ENCODE measurements at regions of chr2 and their contacts with region 1.

Region 1: GRCh38 chr2:18455236-18455862 is 105.1 kb downstream of the RDH14 start:
- DNase-seq: no peak
- ATAC-seq: no peak
- H3K4me3 ChIP-seq: no peak overlapping the region
- H3K4me3 Mint-ChIP-seq: no peak overlapping the region
- H3K27ac ChIP-seq: no peak overlapping the region
- H3K27ac Mint-ChIP-seq: no peak overlapping the region
- H3K4me1 ChIP-seq: no peaks in the 10 kb centered on the region
- H3K4me1 Mint-ChIP-seq: no peaks in the 10 kb centered on the region
- H3K27me3 ChIP-seq: no peaks in the 10 kb centered on the region
- H3K27me3 Mint-ChIP-seq: peaks cover 12% of the 10 kb centered on the region
- CTCF ChIP-seq: no peak

Region 2: GRCh38 chr2:17976871-17977746 is 478.2 kb before region 1 on chr2:
- CTCF ChIA-PET with region 1: no interaction called
- POLR2A ChIA-PET with region 1: no interaction called
- intact Hi-C with region 1: no loop called
- DNase-seq: no peak
- ATAC-seq: no peak
- H3K4me3 ChIP-seq: no peak overlapping the region
- H3K4me3 Mint-ChIP-seq: no peak overlapping the region
- H3K27ac ChIP-seq: no peak overlapping the region
- H3K27ac Mint-ChIP-seq: no peak overlapping the region
- H3K4me1 ChIP-seq: no peaks in the 10 kb centered on the region
- H3K4me1 Mint-ChIP-seq: no peaks in the 10 kb centered on the region
- H3K27me3 ChIP-seq: peaks cover 0 to 3% (median under 1%) of the 10 kb centered on the region in 4 experiments
- H3K27me3 Mint-ChIP-seq: peaks cover 17% of the 10 kb centered on the region
- CTCF ChIP-seq: no peak

Region 3: GRCh38 chr2:18845854-18846445 is 390.6 kb after region 1 on chr2:
- CTCF ChIA-PET with region 1: no interaction called
- POLR2A ChIA-PET with region 1: no interaction called
- intact Hi-C with region 1: no loop called
- DNase-seq: no peak
- ATAC-seq: no peak
- H3K4me3 ChIP-seq: no peak overlapping the region
- H3K4me3 Mint-ChIP-seq: no peak overlapping the region
- H3K27ac ChIP-seq: no peak overlapping the region
- H3K27ac Mint-ChIP-seq: no peak overlapping the region
- H3K4me1 ChIP-seq: no peaks in the 10 kb centered on the region
- H3K4me1 Mint-ChIP-seq: peaks cover 2% of the 10 kb centered on the region
- H3K27me3 ChIP-seq: no peaks in the 10 kb centered on the region
- H3K27me3 Mint-ChIP-seq: no peaks in the 10 kb centered on the region
- CTCF ChIP-seq: no peak

Region 4: DNA sequence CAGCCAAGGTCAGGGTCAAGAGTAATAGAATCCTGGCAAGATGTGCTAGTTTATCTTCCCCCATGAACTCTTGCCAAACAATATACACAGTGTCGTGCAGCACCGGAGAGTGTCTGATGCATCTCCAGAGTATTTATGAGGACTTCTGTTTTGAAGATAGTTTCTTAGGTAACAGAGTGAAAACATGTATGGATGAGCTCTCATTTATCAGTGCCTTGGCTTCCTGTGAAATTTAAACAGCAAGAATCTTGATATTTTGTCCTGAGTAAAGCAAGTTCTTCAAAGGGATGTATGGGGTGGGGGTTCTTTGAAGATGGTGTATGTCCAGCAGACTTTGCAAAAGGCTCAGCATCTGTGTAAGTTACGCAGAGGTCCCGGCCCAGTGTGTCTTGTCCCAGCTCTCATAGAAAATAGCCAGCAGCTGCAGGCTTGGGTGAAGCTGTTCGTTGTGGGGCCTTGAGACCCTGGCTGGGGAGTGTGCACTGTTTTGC is 495.1 kb after region 1 on chr2:
- CTCF ChIA-PET with region 1: no interaction called
- POLR2A ChIA-PET with region 1: no interaction called
- intact Hi-C with region 1: loop called (anchors 5 kb)
- DNase-seq: no peak
- ATAC-seq: no peak
- H3K4me3 ChIP-seq: no peak overlapping the region
- H3K4me3 Mint-ChIP-seq: no peak overlapping the region
- H3K27ac ChIP-seq: no peak overlapping the region
- H3K27ac Mint-ChIP-seq: no peak overlapping the region
- H3K4me1 ChIP-seq: no peaks in the 10 kb centered on the region
- H3K4me1 Mint-ChIP-seq: no peaks in the 10 kb centered on the region
- H3K27me3 ChIP-seq: no peaks in the 10 kb centered on the region
- H3K27me3 Mint-ChIP-seq: peaks cover 3% of the 10 kb centered on the region
- CTCF ChIP-seq: no peak